AG04449 (cell line): ENCODE measurements at regions of chr20 and their contacts with region 1.

Region 1: GRCh38 chr20:64119681-64120341 is 12.4 kb upstream of the NPBWR2 start:
- DNase-seq: no peak
- H3K4me3 ChIP-seq: no peak overlapping the region
- CTCF ChIP-seq: no peak

Region 2: GRCh38 chr20:63919130-63919529 is 200.7 kb before region 1 on chr20:
- CTCF ChIA-PET with region 1: no interaction called
- POLR2A ChIA-PET with region 1: no interaction called
- DNase-seq: no peak
- H3K4me3 ChIP-seq: no peak overlapping the region
- CTCF ChIP-seq: no peak

Region 3: GRCh38 chr20:63980806-63981728 is 138.7 kb before region 1 on chr20 and contains the start of gene PRPF6:
- CTCF ChIA-PET with region 1: interaction called, 18 read pairs
- POLR2A ChIA-PET with region 1: no interaction called
- DNase-seq: peak; percentile 44
- H3K4me3 ChIP-seq: peak within 1 kb of the TSS; percentile 99
- CTCF ChIP-seq: peak; percentile 97

Region 4: DNA sequence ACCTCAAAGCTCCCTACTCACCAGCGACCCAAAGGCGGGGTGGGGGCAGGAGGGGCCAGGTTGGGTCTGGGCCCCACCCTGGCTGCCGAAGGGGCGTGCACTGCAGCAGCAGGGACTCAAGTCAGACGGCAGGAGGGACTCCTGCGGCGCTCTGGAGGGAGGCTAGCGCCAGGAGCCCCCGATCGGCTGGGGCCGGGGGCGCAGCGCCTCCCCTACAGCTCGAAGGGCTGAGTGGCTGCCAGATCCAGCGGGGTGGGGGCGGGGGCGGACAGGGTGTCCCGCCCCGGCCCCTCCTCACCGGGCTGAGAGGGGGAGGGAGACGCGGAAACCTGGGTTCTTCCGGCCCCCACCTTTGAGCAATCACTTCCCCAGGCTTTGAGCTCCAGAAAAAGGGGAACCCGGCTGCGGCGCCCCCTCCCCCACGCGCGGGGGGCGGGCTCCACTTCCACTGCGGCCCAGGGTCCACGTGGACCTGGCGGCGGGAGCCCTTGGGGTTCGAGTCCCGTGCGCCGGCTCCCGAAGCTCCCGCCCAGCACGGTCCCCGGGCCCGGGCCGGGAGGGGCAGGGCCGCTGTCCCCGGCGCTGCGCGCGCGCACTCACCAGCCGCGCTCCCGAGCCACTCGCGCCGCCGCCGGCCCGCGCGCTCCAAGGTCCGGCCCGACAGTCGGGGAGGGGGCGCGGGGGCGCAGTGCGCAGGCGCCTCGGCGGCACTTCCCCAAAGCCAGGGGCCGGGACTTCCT is 40.4 kb before region 1 on chr20 and contains the start of gene RGS19:
- CTCF ChIA-PET with region 1: interaction called, 51 read pairs
- POLR2A ChIA-PET with region 1: no interaction called
- DNase-seq: no peak
- H3K4me3 ChIP-seq: peak within 1 kb of the TSS; percentile 67
- CTCF ChIP-seq: no peak

Region 5: DNA sequence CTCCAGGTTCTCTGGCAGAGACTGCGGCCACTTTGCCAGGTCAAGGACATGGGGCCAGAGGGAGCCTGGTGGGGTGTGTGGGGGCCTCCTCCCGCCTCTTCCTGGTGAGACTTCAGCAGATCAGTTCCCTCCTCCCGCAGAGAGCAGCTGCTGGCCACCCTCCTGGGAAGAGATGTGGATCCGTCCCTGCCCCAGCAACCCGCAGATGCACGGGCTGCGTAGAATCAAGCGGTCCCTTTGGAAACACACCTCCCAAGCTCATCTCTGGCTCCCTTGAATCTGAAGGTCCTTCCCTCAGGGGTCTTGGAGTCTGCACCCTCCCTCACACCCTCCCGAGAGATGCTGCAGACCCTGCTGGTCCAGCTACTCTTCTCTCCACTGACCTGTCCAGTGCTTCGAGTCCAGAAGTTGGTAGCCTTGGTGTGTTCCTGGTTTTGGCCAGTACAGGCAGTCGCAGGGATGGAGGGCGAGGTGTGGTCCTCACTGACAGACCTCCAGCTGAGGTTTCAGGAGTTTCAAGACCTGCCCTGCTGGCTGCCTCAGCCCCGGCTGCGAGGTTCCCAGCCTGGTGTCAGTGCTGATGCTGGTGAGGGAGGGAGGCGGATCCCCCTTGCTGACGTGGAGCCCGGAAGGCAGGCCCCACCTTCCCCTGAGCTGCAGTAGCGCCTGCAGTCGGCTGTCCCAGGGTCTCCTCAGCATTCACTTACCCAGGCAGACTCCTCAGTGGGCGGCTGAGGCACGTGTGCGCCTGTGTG is 12.7 kb before region 1 on chr20 and contains the start of gene NPBWR2:
- CTCF ChIA-PET with region 1: interaction called, 52 read pairs
- POLR2A ChIA-PET with region 1: no interaction called
- DNase-seq: no peak
- H3K4me3 ChIP-seq: no peak within 1 kb of the TSS
- CTCF ChIP-seq: no peak